Left ventricle myocardium superior (tissue), 1 donor: ENCODE measurements at regions of chr12 and their contacts with region 1.

Region 1: DNA sequence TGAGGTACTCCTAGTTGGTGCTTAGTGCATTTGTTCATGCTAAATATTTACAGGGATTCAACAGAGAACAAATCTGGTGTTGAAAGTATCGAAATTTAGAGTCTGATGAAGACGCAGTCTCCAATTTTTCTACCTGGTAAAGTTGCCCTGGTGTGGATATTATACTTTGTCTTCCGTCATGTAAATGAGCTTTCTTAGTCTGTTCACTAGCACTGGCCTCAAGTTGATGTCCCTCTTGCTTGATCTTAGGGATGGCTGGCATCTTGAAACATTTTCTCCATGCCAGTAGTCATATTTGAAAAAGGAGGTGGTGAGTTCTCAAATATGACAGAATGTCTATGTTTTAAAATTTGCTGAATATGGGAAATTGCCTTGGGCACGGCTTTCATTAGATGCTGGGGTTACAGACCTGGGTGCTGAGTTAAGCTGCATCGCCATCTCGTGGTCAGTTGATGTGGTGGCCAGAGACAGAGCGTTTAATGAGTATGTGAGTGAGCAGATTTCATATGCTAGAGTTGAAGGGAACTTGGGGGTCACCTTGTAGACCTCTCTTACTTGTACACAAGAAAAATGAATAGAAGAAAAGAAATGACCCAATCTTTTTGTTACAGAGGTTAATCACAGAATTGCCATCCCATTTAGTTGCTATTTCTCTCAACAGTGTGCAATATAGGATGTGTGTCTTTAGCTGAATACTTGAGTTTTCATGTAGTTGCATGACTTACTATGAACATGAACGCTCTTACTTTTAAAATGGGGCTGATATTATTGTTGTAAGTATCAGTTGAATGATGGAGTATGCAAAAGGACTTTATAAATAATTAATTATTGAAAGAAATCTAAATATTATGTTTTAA is 172.8 kb upstream of the DCN start:
- DNase-seq: peak; percentile 61
- ATAC-seq: peak; percentile 94

Region 2: GRCh38 chr12:90978117-90978770 is 377.1 kb before region 1 on chr12:
- intact Hi-C with region 1: loop called (anchors 10 kb)
- DNase-seq: no peak
- ATAC-seq: peak; percentile 82

Region 3: DNA sequence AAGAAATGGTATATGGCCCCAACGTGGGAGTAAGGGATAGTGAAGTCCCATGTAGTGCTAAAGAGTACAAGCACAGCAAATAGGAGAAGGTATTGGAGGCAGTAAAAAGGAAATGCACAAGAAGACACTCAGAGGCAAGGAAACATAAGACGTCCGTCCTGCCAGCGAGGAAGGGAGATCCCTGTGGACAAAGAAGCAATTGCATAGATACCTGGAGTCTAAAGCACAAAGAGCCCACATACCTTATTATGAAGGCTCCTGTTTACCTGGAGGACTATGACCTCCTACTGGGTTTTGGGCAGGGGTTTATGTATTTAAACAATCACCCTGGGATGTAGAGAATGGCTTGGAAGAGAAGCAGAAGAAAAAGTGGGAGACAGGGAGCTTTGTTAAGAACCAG is 168.5 kb after region 1 on chr12:
- intact Hi-C with region 1: no loop called
- DNase-seq: no peak
- ATAC-seq: no peak